B cell (primary cell): ENCODE measurements at regions of chr6 and their contacts with region 1.

Region 1: GRCh38 chr6:166382933-166383801 is at the start of gene MPC1:
- DNase-seq: peak; percentile 95
- ATAC-seq: peak; percentile 93
- H3K4me3 ChIP-seq: peak within 1 kb of the TSS; percentile 70 to 95 (median 83)
- H3K4me3 Mint-ChIP-seq: peak within 1 kb of the TSS; percentile 97
- H3K27ac ChIP-seq: peak within 1 kb of the TSS; percentile 59 to 80
- H3K27ac Mint-ChIP-seq: peak within 1 kb of the TSS; percentile 90
- H3K4me1 ChIP-seq: peaks cover 7 to 11% of the 10 kb centered on the region in 2 donors
- H3K4me1 Mint-ChIP-seq: peaks cover 15% of the 10 kb centered on the region
- H3K27me3 ChIP-seq: no peaks in the 10 kb centered on the region
- H3K27me3 Mint-ChIP-seq: no peaks in the 10 kb centered on the region
- CTCF ChIP-seq: no peak
- total RNA-seq, gene MPC1: 19.6 and 23.9 TPM in 2 replicates

Region 2: DNA sequence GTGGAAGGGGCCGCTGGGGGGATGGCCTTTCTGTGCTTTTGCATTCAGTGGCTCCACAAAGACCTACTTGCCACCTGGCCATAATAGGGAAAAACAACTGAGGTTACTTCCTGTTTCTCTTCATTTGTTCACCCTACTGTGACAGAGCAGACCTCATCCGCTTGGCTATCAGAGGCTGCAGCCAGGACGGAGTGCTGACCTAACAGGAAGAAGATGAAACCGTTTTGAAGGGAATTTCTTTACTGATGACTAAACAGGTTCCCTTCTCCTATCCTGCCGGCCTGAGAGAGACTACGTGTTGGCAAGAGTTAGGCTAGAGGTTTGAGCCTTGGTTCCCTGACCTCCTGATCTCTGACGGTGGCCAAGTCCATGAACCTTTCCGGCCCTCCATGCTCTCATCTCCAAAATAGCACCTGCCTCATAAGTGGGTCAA is 96.3 kb before region 1 on chr6:
- CTCF ChIA-PET with region 1: interaction called, 10 read pairs
- POLR2A ChIA-PET with region 1: interaction called, 3 read pairs
- intact Hi-C with region 1: no loop called
- DNase-seq: peak; percentile 77
- ATAC-seq: peak; percentile 89
- H3K4me3 ChIP-seq: peak overlapping the region in 3 of 5 experiments; percentile 7 to 27 (median 20)
- H3K4me3 Mint-ChIP-seq: peak overlapping the region; percentile 87
- H3K27ac ChIP-seq: peak overlapping the region; percentile 65 to 66
- H3K27ac Mint-ChIP-seq: peak overlapping the region; percentile 93
- H3K4me1 ChIP-seq: peaks cover 19 to 21% of the 10 kb centered on the region in 2 donors
- H3K4me1 Mint-ChIP-seq: peaks cover 19% of the 10 kb centered on the region
- H3K27me3 ChIP-seq: no peaks in the 10 kb centered on the region
- H3K27me3 Mint-ChIP-seq: peaks cover 10% of the 10 kb centered on the region
- CTCF ChIP-seq: no peak

Region 3: GRCh38 chr6:166318649-166319600 is 64.2 kb before region 1 on chr6:
- CTCF ChIA-PET with region 1: interaction called, 99 read pairs
- POLR2A ChIA-PET with region 1: no interaction called
- intact Hi-C with region 1: no loop called
- DNase-seq: no peak
- ATAC-seq: no peak
- H3K4me3 ChIP-seq: no peak overlapping the region
- H3K4me3 Mint-ChIP-seq: no peak overlapping the region
- H3K27ac ChIP-seq: no peak overlapping the region
- H3K27ac Mint-ChIP-seq: no peak overlapping the region
- H3K4me1 ChIP-seq: no peaks in the 10 kb centered on the region
- H3K4me1 Mint-ChIP-seq: no peaks in the 10 kb centered on the region
- H3K27me3 ChIP-seq: no peaks in the 10 kb centered on the region
- H3K27me3 Mint-ChIP-seq: no peaks in the 10 kb centered on the region
- CTCF ChIP-seq: no peak

Region 4: GRCh38 chr6:166342349-166343149 is 40.6 kb before region 1 on chr6 and contains the start of gene SFT2D1:
- CTCF ChIA-PET with region 1: interaction called, 27 read pairs
- POLR2A ChIA-PET with region 1: interaction called, 7 read pairs
- intact Hi-C with region 1: loop called (anchors 1 kb)
- DNase-seq: peak; percentile 89
- ATAC-seq: peak; percentile 79
- H3K4me3 ChIP-seq: peak within 1 kb of the TSS; percentile 91 to 100 (median 97)
- H3K4me3 Mint-ChIP-seq: peak within 1 kb of the TSS; percentile 90
- H3K27ac ChIP-seq: peak within 1 kb of the TSS; percentile 99 to 100
- H3K27ac Mint-ChIP-seq: peak within 1 kb of the TSS; percentile 97
- H3K4me1 ChIP-seq: peaks cover 34 to 44% of the 10 kb centered on the region in 2 donors
- H3K4me1 Mint-ChIP-seq: peaks cover 17% of the 10 kb centered on the region
- H3K27me3 ChIP-seq: no peaks in the 10 kb centered on the region
- H3K27me3 Mint-ChIP-seq: no peaks in the 10 kb centered on the region
- CTCF ChIP-seq: no peak
- total RNA-seq, gene SFT2D1: 52.0 and 59.0 TPM in 2 replicates

Region 5: GRCh38 chr6:166402582-166403277 is 19.6 kb after region 1 on chr6:
- CTCF ChIA-PET with region 1: interaction called, 21 read pairs
- POLR2A ChIA-PET with region 1: no interaction called
- intact Hi-C with region 1: loop called (anchors 2 kb)
- DNase-seq: no peak
- ATAC-seq: no peak
- H3K4me3 ChIP-seq: no peak overlapping the region
- H3K4me3 Mint-ChIP-seq: no peak overlapping the region
- H3K27ac ChIP-seq: no peak overlapping the region
- H3K27ac Mint-ChIP-seq: no peak overlapping the region
- H3K4me1 ChIP-seq: no peaks in the 10 kb centered on the region
- H3K4me1 Mint-ChIP-seq: no peaks in the 10 kb centered on the region
- H3K27me3 ChIP-seq: peaks cover 0 to 2% (median 0%) of the 10 kb centered on the region in 4 experiments
- H3K27me3 Mint-ChIP-seq: peaks cover 13% of the 10 kb centered on the region
- CTCF ChIP-seq: no peak

Region 6: GRCh38 chr6:167119670-167120381 is 736.7 kb after region 1 on chr6:
- CTCF ChIA-PET with region 1: no interaction called
- POLR2A ChIA-PET with region 1: no interaction called
- intact Hi-C with region 1: loop called (anchors 10 kb)
- DNase-seq: peak; percentile 65
- ATAC-seq: no peak
- H3K4me3 ChIP-seq: peak overlapping the region; percentile 2 to 88 (median 15)
- H3K4me3 Mint-ChIP-seq: peak overlapping the region; percentile 96
- H3K27ac ChIP-seq: peak overlapping the region; percentile 97 to 98
- H3K27ac Mint-ChIP-seq: peak overlapping the region; percentile 100
- H3K4me1 ChIP-seq: peaks cover 71 to 84% of the 10 kb centered on the region in 2 donors
- H3K4me1 Mint-ChIP-seq: peaks cover 85% of the 10 kb centered on the region
- H3K27me3 ChIP-seq: no peaks in the 10 kb centered on the region
- H3K27me3 Mint-ChIP-seq: no peaks in the 10 kb centered on the region
- CTCF ChIP-seq: peak; percentile 41